MCF 10A (cell line): ENCODE measurements at regions of chr16 and their contacts with region 1.

Region 1: DNA sequence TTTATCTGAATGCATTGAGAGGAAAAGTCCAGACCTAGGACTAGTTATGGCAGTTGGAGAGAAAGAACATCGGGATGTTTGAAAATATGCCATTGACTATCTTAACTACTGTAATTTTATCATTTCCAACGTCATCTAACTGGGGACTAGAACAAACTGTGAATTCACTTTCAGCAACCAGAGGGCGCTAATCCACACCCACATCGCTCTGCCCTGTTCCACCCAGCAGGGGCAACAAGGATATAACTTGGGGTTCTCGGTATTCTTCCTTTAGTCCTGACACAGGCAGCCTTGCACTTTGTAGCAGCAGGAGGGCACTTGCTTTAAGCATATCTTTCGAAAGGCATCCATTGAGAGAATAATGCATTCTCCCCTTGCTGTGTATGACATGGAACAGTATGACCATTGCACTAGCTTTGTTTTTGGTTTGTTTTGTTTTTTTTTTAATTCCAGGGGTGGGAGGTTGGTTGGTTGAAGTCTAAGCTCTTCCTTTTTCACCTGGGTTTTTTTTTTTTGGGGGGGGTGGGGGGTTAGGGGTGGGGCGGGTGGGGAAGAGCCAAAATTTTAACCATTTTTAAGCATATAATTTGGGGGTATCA is 31.5 kb downstream of the SIAH1 start:
- DNase-seq: peak; percentile 74
- H3K4me3 Mint-ChIP-seq: no peak overlapping the region
- H3K27ac Mint-ChIP-seq: peak overlapping the region; percentile 46
- H3K4me1 Mint-ChIP-seq: no peaks in the 10 kb centered on the region
- H3K27me3 Mint-ChIP-seq: no peaks in the 10 kb centered on the region
- CTCF ChIP-seq: peak; percentile 71

Region 2: DNA sequence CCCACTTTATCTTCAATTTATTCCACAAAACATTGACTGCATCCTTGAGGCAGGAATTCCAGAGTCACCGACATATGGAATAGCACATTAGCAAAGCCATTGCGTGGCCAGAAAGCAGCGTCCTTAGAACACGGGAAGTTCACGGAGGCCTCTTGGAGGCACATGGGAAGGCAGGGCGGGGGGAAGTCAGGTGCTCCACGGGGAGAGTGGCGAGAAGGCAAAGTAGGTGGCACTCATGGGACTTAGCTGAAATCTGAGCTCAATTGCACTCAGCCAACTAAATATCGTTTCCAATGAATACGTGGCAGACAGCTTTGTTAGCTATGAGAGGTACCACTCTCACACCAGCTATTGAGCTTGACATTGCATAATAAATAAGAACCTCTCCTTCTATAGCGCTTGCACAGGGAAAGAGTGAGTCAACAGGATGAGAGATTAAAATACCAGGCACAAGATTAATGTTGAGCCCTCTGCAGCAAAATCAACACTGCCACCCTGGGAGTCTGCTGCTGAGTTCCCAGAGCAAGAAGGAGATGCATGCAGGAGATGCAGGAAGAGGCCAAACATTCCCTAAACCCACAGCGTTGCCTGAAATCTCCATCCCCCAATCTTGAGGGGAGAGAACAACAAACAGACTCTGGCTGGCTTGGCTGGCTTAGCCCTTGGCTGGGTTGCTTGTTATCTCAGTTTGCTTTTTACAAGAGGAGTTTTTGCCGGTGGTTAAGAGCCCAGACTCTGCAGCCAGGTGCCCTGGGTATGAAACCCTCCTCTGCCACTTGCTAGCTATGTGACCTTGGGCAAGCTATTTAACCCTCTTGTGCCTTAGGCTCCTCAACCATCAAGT is 226.6 kb before region 1 on chr16:
- CTCF ChIA-PET with region 1: no interaction called
- POLR2A ChIA-PET with region 1: no interaction called
- intact Hi-C with region 1: no loop called
- DNase-seq: peak; percentile 92
- H3K4me3 Mint-ChIP-seq: no peak overlapping the region
- H3K27ac Mint-ChIP-seq: no peak overlapping the region
- H3K4me1 Mint-ChIP-seq: peaks cover 8% of the 10 kb centered on the region
- H3K27me3 Mint-ChIP-seq: no peaks in the 10 kb centered on the region
- CTCF ChIP-seq: no peak

Region 3: GRCh38 chr16:48371393-48371780 is 17.7 kb after region 1 on chr16:
- CTCF ChIA-PET with region 1: interaction called, 25 read pairs
- POLR2A ChIA-PET with region 1: interaction called, 21 read pairs
- intact Hi-C with region 1: no loop called
- DNase-seq: no peak
- H3K4me3 Mint-ChIP-seq: no peak overlapping the region
- H3K27ac Mint-ChIP-seq: no peak overlapping the region
- H3K4me1 Mint-ChIP-seq: peaks cover 35% of the 10 kb centered on the region
- H3K27me3 Mint-ChIP-seq: no peaks in the 10 kb centered on the region
- CTCF ChIP-seq: no peak

Region 4: GRCh38 chr16:48393485-48394354 is 40.1 kb after region 1 on chr16:
- CTCF ChIA-PET with region 1: no interaction called
- POLR2A ChIA-PET with region 1: no interaction called
- intact Hi-C with region 1: no loop called
- DNase-seq: no peak
- H3K4me3 Mint-ChIP-seq: no peak overlapping the region
- H3K27ac Mint-ChIP-seq: no peak overlapping the region
- H3K4me1 Mint-ChIP-seq: no peaks in the 10 kb centered on the region
- H3K27me3 Mint-ChIP-seq: no peaks in the 10 kb centered on the region
- CTCF ChIP-seq: no peak

Region 5: DNA sequence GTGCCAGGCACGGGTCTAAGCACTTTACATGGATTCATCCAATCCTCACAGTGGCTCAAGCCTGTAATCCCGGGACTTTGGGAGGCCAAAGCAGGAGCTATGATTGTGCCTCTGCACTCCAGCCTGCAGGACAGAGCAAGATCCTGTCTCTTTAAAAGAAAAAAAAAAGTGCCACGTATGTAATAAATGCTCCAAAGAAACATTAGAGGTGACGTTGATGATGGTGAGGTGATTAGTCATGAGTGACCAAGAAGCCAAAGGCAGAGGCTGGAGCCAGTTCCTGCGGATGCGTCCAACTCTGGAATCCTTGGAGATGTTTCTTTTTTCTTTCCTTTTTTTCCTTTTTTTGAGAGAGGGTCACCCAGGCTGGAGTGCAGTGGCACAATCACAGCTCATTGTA is 90.9 kb after region 1 on chr16:
- CTCF ChIA-PET with region 1: no interaction called
- POLR2A ChIA-PET with region 1: no interaction called
- intact Hi-C with region 1: no loop called
- DNase-seq: peak; percentile 83
- H3K4me3 Mint-ChIP-seq: no peak overlapping the region
- H3K27ac Mint-ChIP-seq: peak overlapping the region; percentile 67
- H3K4me1 Mint-ChIP-seq: peaks cover 10% of the 10 kb centered on the region
- H3K27me3 Mint-ChIP-seq: no peaks in the 10 kb centered on the region
- CTCF ChIP-seq: no peak

Region 6: GRCh38 chr16:48542020-48542473 is 188.4 kb after region 1 on chr16:
- CTCF ChIA-PET with region 1: interaction called, 6 read pairs
- POLR2A ChIA-PET with region 1: no interaction called
- intact Hi-C with region 1: loop called (anchors 1 kb)
- DNase-seq: peak; percentile 47
- H3K4me3 Mint-ChIP-seq: no peak overlapping the region
- H3K27ac Mint-ChIP-seq: peak overlapping the region; percentile 63
- H3K4me1 Mint-ChIP-seq: no peaks in the 10 kb centered on the region
- H3K27me3 Mint-ChIP-seq: no peaks in the 10 kb centered on the region
- CTCF ChIP-seq: peak; percentile 35